ENCODE measurements at regions of chr17 and their contacts with region 1.

Region 1: DNA sequence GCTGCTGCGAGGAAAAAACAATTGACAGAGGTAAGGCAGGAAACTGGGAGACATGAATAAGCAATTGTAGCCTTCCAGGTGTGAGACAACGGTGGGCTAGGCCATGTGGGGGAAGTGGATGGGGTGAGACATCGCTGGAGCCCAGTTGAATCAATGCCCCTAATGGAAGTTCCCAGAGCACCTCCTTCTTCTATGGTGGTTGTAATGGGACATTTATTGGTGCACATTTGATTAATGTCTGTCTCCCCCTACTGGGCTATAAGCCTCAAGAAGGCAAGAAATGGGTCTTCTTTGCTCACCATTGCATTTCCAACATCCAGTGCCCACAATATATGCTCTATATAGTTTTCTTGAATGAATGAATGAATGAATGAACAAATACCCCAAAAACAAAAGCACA is 22.7 kb upstream of the CD300E start:
- DNase-seq: no peak
- H3K4me3 Mint-ChIP-seq: no peak overlapping the region
- H3K27ac Mint-ChIP-seq: no peak overlapping the region
- H3K4me1 Mint-ChIP-seq: peaks cover 5% of the 10 kb centered on the region
- H3K27me3 Mint-ChIP-seq: peaks cover 73% of the 10 kb centered on the region

Region 2: DNA sequence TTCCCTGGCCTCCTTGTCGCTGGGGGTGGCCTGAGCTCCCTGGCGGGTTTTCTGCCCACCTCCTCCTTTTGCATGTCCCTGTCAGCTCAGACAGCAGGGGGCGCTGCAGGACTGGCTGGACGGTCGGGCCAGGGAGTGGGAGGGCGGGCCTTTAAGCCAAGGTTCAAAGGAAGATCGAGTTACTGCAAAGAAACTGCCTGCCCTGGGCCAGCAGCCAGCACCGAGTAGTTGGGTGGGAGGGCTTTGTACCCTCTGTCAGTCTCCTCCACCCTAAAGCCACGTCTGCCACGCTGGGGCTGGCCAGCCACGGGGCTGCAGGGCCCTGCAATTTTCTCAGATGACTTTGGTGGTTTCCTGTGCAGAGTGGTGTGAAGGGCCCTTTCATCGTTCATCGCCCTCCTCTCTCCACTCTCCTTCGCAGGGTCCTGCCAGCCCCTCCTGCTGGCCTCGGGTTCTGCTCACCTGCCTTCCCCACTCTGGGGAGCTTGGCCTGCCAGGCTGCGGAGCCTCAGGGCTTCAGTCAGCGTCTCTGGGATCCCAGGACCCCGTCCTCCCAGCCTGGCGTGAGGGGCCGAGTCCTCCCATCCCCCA is 266.6 kb before region 1 on chr17:
- intact Hi-C with region 1: loop called (anchors 1 kb)
- DNase-seq: peak; percentile 83
- H3K4me3 Mint-ChIP-seq: no peak overlapping the region
- H3K27ac Mint-ChIP-seq: no peak overlapping the region
- H3K4me1 Mint-ChIP-seq: no peaks in the 10 kb centered on the region
- H3K27me3 Mint-ChIP-seq: peaks cover 7% of the 10 kb centered on the region

Region 3: GRCh38 chr17:74768069-74768762 is 122.0 kb after region 1 on chr17:
- intact Hi-C with region 1: no loop called
- DNase-seq: no peak
- H3K4me3 Mint-ChIP-seq: no peak overlapping the region
- H3K27ac Mint-ChIP-seq: peak overlapping the region; percentile 66
- H3K4me1 Mint-ChIP-seq: peaks cover 15% of the 10 kb centered on the region
- H3K27me3 Mint-ChIP-seq: no peaks in the 10 kb centered on the region

Measured in activated T-helper 1 cell treated with anti-CD3 and anti-CD28 coated beads, Interleukin-12 subunit alpha, Interleukin-12 subunit beta, Interleukin-2, Interleukin-4 antibody, amounts not matched to agents 30 ng/mL and 10 ng/mL and 1 ng/mL, durations not matched to agents 14 hours and 24 hours and 36 hours (primary cell).